Mammary epithelial cell (primary cell): ENCODE measurements at regions of chr5 and their contacts with region 1.

Region 1: GRCh38 chr5:33313150-33313549 is 127.6 kb upstream of the TARS1 start:
- DNase-seq: peak; percentile 98
- H3K4me3 ChIP-seq: no peak overlapping the region
- H3K27ac ChIP-seq: peak overlapping the region; percentile 99
- H3K4me1 ChIP-seq: peaks cover 43% of the 10 kb centered on the region
- H3K27me3 ChIP-seq: no peaks in the 10 kb centered on the region
- CTCF ChIP-seq: no peak

Region 2: GRCh38 chr5:32955814-32956213 is 357.3 kb before region 1 on chr5:
- CTCF ChIA-PET with region 1: no interaction called
- dilution Hi-C with region 1: no loop called
- in situ Hi-C with region 1: no loop called
- intact Hi-C with region 1: loop called (anchors 5 kb)
- DNase-seq: no peak
- H3K4me3 ChIP-seq: no peak overlapping the region
- H3K27ac ChIP-seq: no peak overlapping the region
- H3K4me1 ChIP-seq: peaks cover 10% of the 10 kb centered on the region
- H3K27me3 ChIP-seq: no peaks in the 10 kb centered on the region
- CTCF ChIP-seq: no peak

Region 3: DNA sequence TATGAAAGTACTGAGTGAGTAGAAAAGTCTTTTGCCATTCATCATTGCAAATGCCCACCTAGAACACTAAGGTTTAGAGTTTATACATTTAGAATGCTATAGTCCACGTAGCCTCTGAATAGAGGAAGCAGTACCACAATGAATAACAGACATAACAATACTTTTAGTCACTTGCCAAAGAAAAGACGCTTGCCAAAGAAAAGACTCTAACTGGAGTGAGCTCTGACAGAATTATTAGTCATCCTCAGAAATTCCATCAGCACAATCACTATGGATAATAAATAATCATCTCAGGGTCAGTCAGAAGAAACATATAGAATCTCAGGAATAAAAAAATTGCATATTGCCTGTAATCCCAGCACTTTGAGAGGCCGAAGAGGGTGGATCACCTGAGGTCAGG is 40.9 kb before region 1 on chr5:
- CTCF ChIA-PET with region 1: no interaction called
- dilution Hi-C with region 1: no loop called
- in situ Hi-C with region 1: no loop called
- intact Hi-C with region 1: loop called (anchors 5 kb)
- DNase-seq: peak; percentile 90
- H3K4me3 ChIP-seq: no peak overlapping the region
- H3K27ac ChIP-seq: peak overlapping the region; percentile 80
- H3K4me1 ChIP-seq: peaks cover 29% of the 10 kb centered on the region
- H3K27me3 ChIP-seq: no peaks in the 10 kb centered on the region
- CTCF ChIP-seq: no peak

Region 4: DNA sequence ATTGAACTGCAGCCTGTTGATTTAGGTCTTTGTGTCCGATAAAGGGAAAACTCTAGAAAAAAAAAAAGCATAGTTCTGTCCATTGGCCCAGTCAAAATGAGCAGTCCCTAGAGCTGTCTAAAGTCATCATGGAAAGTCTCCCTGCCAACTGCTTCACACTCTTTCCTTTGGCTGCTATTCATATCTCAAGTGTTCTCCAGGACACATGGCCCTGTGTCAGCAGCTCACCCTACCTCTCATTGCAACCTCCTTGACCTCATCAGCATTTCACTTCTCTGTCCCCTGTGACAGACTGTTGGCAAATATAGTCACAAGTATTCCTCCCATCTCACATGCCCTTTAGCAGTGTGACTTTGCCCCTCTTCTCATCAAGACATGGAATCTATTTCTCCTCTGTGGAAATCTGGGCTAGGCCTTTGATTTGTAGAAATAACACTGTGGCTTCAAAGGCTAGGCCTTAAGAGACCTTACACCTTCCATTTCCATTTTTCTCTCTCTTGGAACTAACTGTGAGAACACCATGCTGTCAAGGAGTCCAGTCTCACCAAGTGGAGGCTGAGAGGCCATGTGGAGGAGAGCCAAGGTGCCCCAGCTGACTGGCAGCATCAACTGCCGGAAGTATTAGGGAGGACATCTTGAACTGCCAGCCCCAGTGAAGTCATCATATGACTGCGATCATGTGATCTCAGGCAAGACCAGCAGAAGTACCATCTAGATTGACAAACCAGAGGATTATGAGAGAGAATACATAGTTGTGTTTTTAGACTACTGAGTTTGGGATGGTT is 21.7 kb before region 1 on chr5:
- CTCF ChIA-PET with region 1: no interaction called
- dilution Hi-C with region 1: no loop called
- in situ Hi-C with region 1: no loop called
- intact Hi-C with region 1: no loop called
- DNase-seq: no peak
- H3K4me3 ChIP-seq: no peak overlapping the region
- H3K27ac ChIP-seq: no peak overlapping the region
- H3K4me1 ChIP-seq: no peaks in the 10 kb centered on the region
- H3K27me3 ChIP-seq: no peaks in the 10 kb centered on the region
- CTCF ChIP-seq: no peak

Region 5: GRCh38 chr5:33343676-33344327 is 30.7 kb after region 1 on chr5:
- CTCF ChIA-PET with region 1: no interaction called
- dilution Hi-C with region 1: no loop called
- in situ Hi-C with region 1: no loop called
- intact Hi-C with region 1: loop called (anchors 1 kb)
- DNase-seq: peak; percentile 73
- H3K4me3 ChIP-seq: no peak overlapping the region
- H3K27ac ChIP-seq: peak overlapping the region; percentile 74
- H3K4me1 ChIP-seq: peaks cover 9% of the 10 kb centered on the region
- H3K27me3 ChIP-seq: no peaks in the 10 kb centered on the region
- CTCF ChIP-seq: no peak

Region 6: GRCh38 chr5:33379757-33380156 is 66.6 kb after region 1 on chr5:
- CTCF ChIA-PET with region 1: no interaction called
- dilution Hi-C with region 1: no loop called
- in situ Hi-C with region 1: no loop called
- intact Hi-C with region 1: loop called (anchors 5 kb)
- DNase-seq: peak; percentile 20
- H3K4me3 ChIP-seq: no peak overlapping the region
- H3K27ac ChIP-seq: no peak overlapping the region
- H3K4me1 ChIP-seq: peaks cover 6% of the 10 kb centered on the region
- H3K27me3 ChIP-seq: no peaks in the 10 kb centered on the region
- CTCF ChIP-seq: peak; percentile 50 to 51